ENCODE measurements at regions of chr6 and their contacts with region 1.

Region 1: DNA sequence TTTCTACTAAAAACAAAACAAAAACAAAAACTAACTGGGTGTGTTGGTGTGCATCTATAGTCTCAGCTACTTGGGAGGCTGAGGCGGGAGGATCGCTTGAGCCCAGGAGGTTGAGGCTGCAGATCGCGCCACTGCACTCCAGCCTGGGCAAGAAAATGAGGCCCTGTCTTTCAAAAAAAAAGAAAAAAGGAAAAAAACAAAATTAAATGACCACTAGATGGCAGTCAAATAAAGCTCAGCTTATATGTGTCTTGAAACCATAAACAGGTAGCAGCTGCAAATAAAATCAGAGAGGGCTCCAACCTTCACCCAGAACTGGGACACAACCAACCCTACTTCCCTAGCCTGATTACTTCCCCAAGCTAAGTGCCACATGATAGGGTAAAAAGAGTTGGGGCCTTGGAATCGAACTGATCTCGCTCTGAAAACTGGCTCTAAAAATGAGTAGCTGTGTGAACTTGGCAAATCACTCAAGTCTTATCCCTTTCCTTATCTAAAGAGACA is 67.1 kb upstream of the ADGRF4 start:
- DNase-seq: no peak
- ATAC-seq: peak; percentile 68
- H3K4me3 Mint-ChIP-seq: no peak overlapping the region
- H3K27ac Mint-ChIP-seq: peak overlapping the region; percentile 21
- H3K4me1 Mint-ChIP-seq: peaks cover 9% of the 10 kb centered on the region
- H3K27me3 Mint-ChIP-seq: peaks cover 2% of the 10 kb centered on the region

Region 2: GRCh38 chr6:47413752-47414422 is 217.4 kb before region 1 on chr6:
- CTCF ChIA-PET with region 1: interaction called, 11 read pairs
- DNase-seq: peak; percentile 59
- ATAC-seq: peak; percentile 83
- H3K4me3 Mint-ChIP-seq: peak overlapping the region; percentile 73
- H3K27ac Mint-ChIP-seq: peak overlapping the region; percentile 90
- H3K4me1 Mint-ChIP-seq: peaks cover 22% of the 10 kb centered on the region
- H3K27me3 Mint-ChIP-seq: peaks cover 11% of the 10 kb centered on the region

Region 3: GRCh38 chr6:47571488-47571887 is 59.8 kb before region 1 on chr6:
- CTCF ChIA-PET with region 1: no interaction called
- DNase-seq: no peak
- ATAC-seq: no peak
- H3K4me3 Mint-ChIP-seq: no peak overlapping the region
- H3K27ac Mint-ChIP-seq: no peak overlapping the region
- H3K4me1 Mint-ChIP-seq: peaks cover 5% of the 10 kb centered on the region
- H3K27me3 Mint-ChIP-seq: no peaks in the 10 kb centered on the region

Region 4: GRCh38 chr6:47581591-47581990 is 49.7 kb before region 1 on chr6:
- CTCF ChIA-PET with region 1: no interaction called
- DNase-seq: no peak
- ATAC-seq: no peak
- H3K4me3 Mint-ChIP-seq: no peak overlapping the region
- H3K27ac Mint-ChIP-seq: no peak overlapping the region
- H3K4me1 Mint-ChIP-seq: no peaks in the 10 kb centered on the region
- H3K27me3 Mint-ChIP-seq: no peaks in the 10 kb centered on the region

Region 5: GRCh38 chr6:47646567-47647088 is 15.3 kb after region 1 on chr6:
- CTCF ChIA-PET with region 1: no interaction called
- DNase-seq: no peak
- ATAC-seq: no peak
- H3K4me3 Mint-ChIP-seq: no peak overlapping the region
- H3K27ac Mint-ChIP-seq: no peak overlapping the region
- H3K4me1 Mint-ChIP-seq: no peaks in the 10 kb centered on the region
- H3K27me3 Mint-ChIP-seq: peaks cover 11% of the 10 kb centered on the region

Region 6: GRCh38 chr6:47733879-47734558 is 102.7 kb after region 1 on chr6:
- CTCF ChIA-PET with region 1: interaction called, 29 read pairs
- DNase-seq: no peak
- ATAC-seq: no peak
- H3K4me3 Mint-ChIP-seq: no peak overlapping the region
- H3K27ac Mint-ChIP-seq: no peak overlapping the region
- H3K4me1 Mint-ChIP-seq: no peaks in the 10 kb centered on the region
- H3K27me3 Mint-ChIP-seq: peaks cover 9% of the 10 kb centered on the region

Region 7: DNA sequence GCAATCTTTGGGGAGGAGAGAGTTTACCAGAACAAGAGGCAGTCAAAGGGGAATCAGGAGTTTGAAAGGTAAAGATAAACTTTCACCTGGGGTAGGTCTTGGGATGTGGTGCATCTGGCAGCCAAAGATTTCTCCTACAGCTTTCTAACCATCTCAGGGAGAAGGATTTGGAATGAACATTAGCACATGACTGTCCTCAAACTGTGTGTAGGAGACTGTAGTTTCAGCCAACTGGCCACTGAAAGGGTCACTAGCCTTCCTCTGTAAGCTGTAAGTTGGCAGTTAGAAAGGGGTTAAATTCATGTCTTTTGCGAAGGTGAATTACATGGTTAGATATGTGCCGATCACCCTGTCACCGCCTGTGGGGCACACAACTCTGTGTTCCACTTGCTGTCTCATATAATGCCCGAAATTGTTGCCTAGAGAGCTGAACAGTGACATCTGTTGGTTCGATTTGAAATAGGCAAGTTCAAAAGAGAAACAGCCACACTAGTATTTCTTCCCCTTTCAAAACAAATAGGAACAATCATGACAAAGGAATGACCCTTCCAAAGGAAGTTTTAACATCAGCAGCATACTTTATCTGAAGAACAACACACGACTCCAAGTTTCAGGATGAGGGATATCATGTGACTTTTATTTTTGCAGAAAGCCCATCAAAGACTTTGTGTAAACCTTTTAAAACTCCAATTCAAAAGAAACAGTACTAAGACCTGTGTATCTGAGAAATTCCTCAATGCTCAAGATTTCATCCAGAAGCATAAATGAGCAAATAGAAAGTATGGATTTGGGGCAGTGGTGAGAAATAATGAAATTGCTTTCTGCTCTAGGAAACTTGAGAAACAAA is 149.4 kb after region 1 on chr6:
- CTCF ChIA-PET with region 1: interaction called, 44 read pairs
- DNase-seq: peak; percentile 53
- ATAC-seq: peak; percentile 93
- H3K4me3 Mint-ChIP-seq: no peak overlapping the region
- H3K27ac Mint-ChIP-seq: no peak overlapping the region
- H3K4me1 Mint-ChIP-seq: peaks cover 9% of the 10 kb centered on the region
- H3K27me3 Mint-ChIP-seq: peaks cover 19% of the 10 kb centered on the region

Region 8: DNA sequence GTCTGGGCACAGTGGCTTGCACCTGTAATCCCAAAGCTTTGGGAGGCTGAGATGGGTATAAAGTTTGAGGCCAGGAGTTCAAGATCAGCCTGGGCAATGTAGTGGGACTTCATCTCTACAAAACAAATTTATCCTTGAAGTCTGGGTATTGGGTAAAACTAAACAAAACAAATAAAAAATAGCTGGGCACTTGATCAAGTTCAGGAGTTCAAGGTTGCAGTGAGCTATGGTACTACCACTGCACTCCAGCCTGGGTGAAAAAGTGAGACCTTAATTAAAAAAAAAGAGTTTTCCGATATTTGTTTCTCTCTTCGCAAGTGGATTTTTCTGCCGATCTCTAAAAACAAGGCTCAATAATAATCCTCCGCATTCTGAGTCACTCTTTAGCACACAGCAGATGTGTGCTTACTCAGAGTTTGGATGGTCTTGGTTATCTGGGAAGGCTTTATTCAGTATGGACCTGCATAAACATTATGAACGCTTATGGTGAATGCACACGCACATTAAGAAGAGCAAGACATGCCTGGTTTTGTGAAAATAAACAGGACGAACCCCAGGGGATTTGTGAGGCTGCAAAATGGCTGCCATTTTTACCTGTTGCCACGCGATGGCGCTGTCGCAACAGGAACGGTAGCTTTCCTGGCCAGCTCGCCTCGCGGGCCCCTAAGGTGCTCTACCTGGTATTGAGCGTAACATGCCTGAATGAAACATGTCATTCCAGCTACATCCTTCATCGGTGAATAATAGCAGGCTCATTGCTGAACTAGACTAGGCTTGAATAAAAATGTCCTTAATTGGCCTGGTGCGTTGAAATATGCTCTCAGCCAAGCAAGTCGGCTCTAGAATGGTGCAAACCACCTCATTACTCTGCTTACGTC is 156.5 kb after region 1 on chr6:
- CTCF ChIA-PET with region 1: interaction called, 11 read pairs
- DNase-seq: peak; percentile 59
- ATAC-seq: peak; percentile 68
- H3K4me3 Mint-ChIP-seq: no peak overlapping the region
- H3K27ac Mint-ChIP-seq: no peak overlapping the region
- H3K4me1 Mint-ChIP-seq: no peaks in the 10 kb centered on the region
- H3K27me3 Mint-ChIP-seq: peaks cover 54% of the 10 kb centered on the region

Region 9: DNA sequence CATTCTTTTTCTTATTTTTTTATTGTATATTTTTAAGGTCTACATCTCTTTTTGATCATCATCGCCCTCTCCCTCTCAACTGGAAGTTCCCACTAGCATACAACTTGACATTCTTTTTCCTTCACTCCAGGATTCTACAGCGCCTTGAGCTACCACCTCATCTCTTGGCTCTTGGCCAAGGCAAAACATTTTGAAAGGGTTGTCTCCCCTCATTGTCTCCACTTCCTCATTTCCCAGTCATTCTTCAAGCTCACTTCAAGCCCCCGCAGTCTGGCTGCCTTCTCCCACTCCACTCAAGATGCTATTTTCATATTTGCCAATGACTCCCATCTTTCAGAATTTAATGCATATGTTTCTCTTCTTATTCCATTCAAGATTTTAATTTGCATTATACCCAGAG is 213.6 kb after region 1 on chr6:
- CTCF ChIA-PET with region 1: no interaction called
- DNase-seq: no peak
- ATAC-seq: no peak
- H3K4me3 Mint-ChIP-seq: no peak overlapping the region
- H3K27ac Mint-ChIP-seq: no peak overlapping the region
- H3K4me1 Mint-ChIP-seq: no peaks in the 10 kb centered on the region
- H3K27me3 Mint-ChIP-seq: no peaks in the 10 kb centered on the region

Measured in activated CD8-positive, alpha-beta memory T cell treated with anti-CD3 and anti-CD28 coated beads, Interleukin-2, amount 10 ng/mL, durations not matched to agents 7 days and 5 days (primary cell).